PC-9 (cell line): ENCODE measurements at regions of chr21 and their contacts with region 1.

Region 1: GRCh38 chr21:31671146-31671716 is 11.7 kb downstream of the SOD1 start:
- DNase-seq: no peak
- H3K4me3 ChIP-seq: no peak overlapping the region
- H3K27ac ChIP-seq: no peak overlapping the region
- H3K4me1 ChIP-seq: no peaks in the 10 kb centered on the region
- H3K27me3 ChIP-seq: no peaks in the 10 kb centered on the region
- CTCF ChIP-seq: no peak

Region 2: GRCh38 chr21:31707499-31707898 is 36.3 kb after region 1 on chr21:
- CTCF ChIA-PET with region 1: interaction called, 8 read pairs
- POLR2A ChIA-PET with region 1: interaction called, 18 read pairs
- intact Hi-C with region 1: no loop called
- DNase-seq: no peak
- H3K4me3 ChIP-seq: no peak overlapping the region
- H3K27ac ChIP-seq: no peak overlapping the region
- H3K4me1 ChIP-seq: no peaks in the 10 kb centered on the region
- H3K27me3 ChIP-seq: no peaks in the 10 kb centered on the region
- CTCF ChIP-seq: no peak